ENCODE measurements at regions of chr12 and their contacts with region 1.

Region 1: DNA sequence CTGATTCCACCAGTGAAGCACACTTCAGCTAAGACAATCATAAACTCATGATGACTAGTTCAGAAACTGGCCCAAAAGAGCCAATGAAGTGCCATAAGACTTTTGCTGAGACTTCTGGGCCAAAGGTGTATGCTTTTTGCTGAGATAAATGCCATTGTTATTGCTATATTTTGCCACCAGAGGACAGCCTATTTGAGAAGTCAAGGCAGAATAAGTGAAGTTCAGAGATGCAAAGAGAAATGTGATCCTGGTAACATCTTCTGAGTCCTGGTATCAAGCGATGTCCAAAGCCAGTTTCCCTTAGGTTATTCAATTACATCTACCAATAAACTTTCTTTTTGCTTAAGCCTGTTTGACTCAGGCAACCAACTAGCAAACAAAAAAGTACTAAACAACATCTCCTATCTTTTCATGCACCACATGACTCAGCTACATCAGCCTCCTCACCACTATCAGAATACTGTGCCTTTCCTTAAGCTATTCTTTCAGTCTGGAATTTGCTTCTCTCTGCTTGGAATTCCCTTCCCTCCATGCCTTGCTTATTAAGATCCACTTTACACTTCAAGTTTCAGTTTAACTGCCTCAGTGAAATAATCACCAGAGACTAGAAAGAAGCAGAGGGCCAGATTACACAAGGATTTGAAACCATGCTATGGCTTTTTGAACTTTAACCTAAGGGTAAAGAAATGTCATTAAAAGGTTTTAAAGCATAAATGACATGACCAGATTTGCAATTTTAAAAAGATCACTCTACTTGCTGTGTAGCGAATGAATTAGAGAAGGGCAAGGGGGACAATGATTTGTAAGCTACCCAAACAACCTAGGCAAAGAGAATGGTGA is 14.0 kb downstream of the CRY1 start:
- DNase-seq: no peak
- H3K4me3 ChIP-seq: no peak overlapping the region
- H3K27ac ChIP-seq: no peak overlapping the region
- H3K4me1 ChIP-seq: peaks cover 0 to 2% (median 0%) of the 10 kb centered on the region in 4 experiments; a peak in 2 of 7 replicates
- H3K27me3 ChIP-seq: no peaks in the 10 kb centered on the region
- CTCF ChIP-seq: peak in 2 of 3 experiments; percentile 30 to 55; a peak in 2 of 4 replicates
- EP300 ChIP-seq: no peak
- POLR2A ChIP-seq: no peak
- RAD21 ChIP-seq: peak; percentile 25 to 35; a peak in 3 of 4 replicates

Region 2: DNA sequence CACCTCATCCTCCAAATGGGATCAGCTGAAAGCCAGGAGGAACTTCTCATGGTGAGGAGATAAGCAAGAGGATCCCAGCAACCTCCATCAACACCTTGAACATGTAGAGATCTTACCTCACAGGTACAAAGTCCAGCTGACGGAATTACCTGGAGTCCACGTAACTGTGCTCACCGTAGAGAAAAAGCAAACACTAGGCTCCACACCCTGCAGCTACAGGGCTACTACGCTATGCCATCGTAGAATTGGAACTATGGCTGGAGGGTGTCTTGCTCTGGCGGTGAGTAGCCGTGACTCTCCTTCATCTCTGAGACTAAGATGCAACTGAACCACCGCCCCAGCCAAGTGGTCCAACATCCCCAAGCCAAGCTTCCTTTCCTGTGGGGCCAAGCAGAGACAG is 36.6 kb before region 1 on chr12:
- CTCF ChIA-PET with region 1: no interaction called
- POLR2A ChIA-PET with region 1: no interaction called
- DNase-seq: no peak
- H3K4me3 ChIP-seq: no peak overlapping the region
- H3K27ac ChIP-seq: no peak overlapping the region
- H3K4me1 ChIP-seq: no peaks in the 10 kb centered on the region
- H3K27me3 ChIP-seq: no peaks in the 10 kb centered on the region
- CTCF ChIP-seq: no peak
- EP300 ChIP-seq: no peak
- POLR2A ChIP-seq: no peak
- RAD21 ChIP-seq: no peak

Region 3: DNA sequence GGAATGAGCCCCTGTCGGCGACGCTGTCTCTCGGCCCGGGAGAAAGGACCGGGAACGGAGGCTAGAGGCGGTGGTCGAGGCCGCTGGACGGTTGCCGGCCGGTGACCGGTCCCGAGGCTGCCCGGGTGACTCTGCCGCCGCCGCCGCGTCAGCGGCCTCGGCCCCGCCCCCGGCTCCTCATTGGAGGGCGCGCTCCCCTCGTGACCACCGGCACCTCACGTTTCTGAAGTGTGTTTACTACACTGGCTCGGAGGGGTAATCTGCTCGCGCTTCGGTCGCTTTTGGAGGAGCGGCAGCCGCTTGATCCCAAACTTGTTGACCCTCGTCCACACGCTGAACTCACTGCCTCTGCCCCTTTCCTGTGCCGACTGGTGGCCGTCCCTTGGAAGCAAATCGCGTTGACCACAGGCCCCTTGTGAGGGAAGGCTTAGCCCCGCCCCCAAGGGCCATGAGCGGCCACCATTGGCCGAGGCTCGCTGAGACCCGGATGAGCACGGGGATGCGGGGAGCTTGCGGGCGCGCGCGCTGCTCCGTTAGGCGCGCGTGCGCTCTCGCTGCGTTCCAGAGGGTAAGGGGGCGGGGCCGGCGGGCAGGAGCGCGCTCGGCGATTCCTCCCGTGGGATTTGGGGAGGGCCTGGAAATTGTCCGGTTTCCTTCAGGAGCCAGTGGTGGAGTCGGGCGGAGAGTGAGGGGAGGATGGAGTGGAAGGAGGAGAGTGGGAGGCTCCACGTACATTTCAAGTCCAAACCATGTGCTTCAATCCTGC is 14.2 kb after region 1 on chr12 and contains the start of gene CRY1:
- CTCF ChIA-PET with region 1: interaction called, 23 read pairs
- POLR2A ChIA-PET with region 1: interaction called, 4 read pairs
- DNase-seq: peak; percentile 81 to 99
- H3K4me3 ChIP-seq: peak within 1 kb of the TSS; percentile 89 to 98 (median 96)
- H3K27ac ChIP-seq: peak within 1 kb of the TSS; percentile 99
- H3K4me1 ChIP-seq: peaks cover 0 to 3% (median 0%) of the 10 kb centered on the region in 4 experiments; a peak in 4 of 7 replicates
- H3K27me3 ChIP-seq: no peaks in the 10 kb centered on the region
- CTCF ChIP-seq: no peak
- EP300 ChIP-seq: no peak
- POLR2A ChIP-seq: peak; percentile 20 to 87
- RAD21 ChIP-seq: no peak
- total RNA-seq, gene CRY1: 25.1 TPM in 2 replicates